ENCODE measurements at regions of chr15 and their contacts with region 1.

Region 1: GRCh38 chr15:77959432-77959879 is 118.1 kb downstream of the TBC1D2B start:
- DNase-seq: no peak
- ATAC-seq: peak; percentile 100
- H3K4me3 ChIP-seq: peak overlapping the region; percentile 23 to 43
- H3K27ac ChIP-seq: no peak overlapping the region; the same call in 1 of the 2 replicates
- H3K4me1 ChIP-seq: peaks cover 3% of the 10 kb centered on the region; the same call in 1 of the 2 replicates
- H3K27me3 ChIP-seq: no peaks in the 10 kb centered on the region; the same call in 1 of the 2 replicates
- CTCF ChIP-seq: peak; percentile 97

Region 2: GRCh38 chr15:78195735-78196201 is 236.3 kb after region 1 on chr15:
- CTCF ChIA-PET with region 1: no interaction called
- POLR2A ChIA-PET with region 1: interaction called, 15 read pairs
- in situ Hi-C with region 1: no loop called
- intact Hi-C with region 1: no loop called
- DNase-seq: no peak
- ATAC-seq: peak; percentile 95
- H3K4me3 ChIP-seq: no peak overlapping the region
- H3K27ac ChIP-seq: no peak overlapping the region
- H3K4me1 ChIP-seq: no peaks in the 10 kb centered on the region
- H3K27me3 ChIP-seq: no peaks in the 10 kb centered on the region
- CTCF ChIP-seq: peak; percentile 92

Measured in Panc1 (cell line).